ENCODE measurements at regions of chr10 and their contacts with region 1.

Region 1: DNA sequence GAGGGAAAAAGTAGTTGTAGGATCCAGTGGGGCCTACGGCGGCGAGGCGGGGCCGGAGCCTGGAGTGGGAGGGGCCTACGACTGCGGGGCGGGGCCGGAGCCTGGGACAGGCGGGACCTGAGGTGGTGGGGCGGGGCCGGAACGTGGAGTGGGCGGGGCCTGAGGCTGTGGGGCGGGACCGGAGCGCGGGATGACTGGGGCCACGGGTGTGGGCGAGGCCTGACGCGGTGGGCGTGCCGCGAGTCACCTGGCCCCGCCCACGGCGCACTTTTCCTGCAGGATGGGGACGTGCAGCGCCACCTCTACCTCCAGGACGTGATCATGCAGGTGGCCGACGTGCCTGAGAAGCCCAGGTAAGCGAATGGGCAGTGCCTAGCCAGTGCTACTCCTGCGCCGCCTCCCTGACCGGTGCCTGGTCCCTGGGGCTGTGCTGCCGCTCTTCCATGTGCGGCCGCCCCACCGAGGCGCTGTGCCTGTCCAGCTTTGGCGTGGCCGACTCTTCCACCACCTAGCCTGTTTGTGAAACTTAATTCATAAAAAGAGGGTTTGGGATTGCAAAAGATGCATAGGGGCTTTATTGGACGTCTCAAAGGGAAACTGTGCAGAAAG is 501 bp downstream of the ZNF511 start:
- DNase-seq: peak; percentile 96
- H3K4me3 ChIP-seq: peak overlapping the region; percentile 60 to 99 (median 96)
- H3K27ac ChIP-seq: peak overlapping the region; percentile 86 to 97 (median 94)
- H3K4me1 ChIP-seq: peaks cover 0 to 50% (median 41%) of the 10 kb centered on the region in 4 donors
- H3K27me3 ChIP-seq: no peaks in the 10 kb centered on the region
- CTCF ChIP-seq: no peak
- EP300 ChIP-seq: no peak
- POLR2A ChIP-seq: no peak

Region 2: DNA sequence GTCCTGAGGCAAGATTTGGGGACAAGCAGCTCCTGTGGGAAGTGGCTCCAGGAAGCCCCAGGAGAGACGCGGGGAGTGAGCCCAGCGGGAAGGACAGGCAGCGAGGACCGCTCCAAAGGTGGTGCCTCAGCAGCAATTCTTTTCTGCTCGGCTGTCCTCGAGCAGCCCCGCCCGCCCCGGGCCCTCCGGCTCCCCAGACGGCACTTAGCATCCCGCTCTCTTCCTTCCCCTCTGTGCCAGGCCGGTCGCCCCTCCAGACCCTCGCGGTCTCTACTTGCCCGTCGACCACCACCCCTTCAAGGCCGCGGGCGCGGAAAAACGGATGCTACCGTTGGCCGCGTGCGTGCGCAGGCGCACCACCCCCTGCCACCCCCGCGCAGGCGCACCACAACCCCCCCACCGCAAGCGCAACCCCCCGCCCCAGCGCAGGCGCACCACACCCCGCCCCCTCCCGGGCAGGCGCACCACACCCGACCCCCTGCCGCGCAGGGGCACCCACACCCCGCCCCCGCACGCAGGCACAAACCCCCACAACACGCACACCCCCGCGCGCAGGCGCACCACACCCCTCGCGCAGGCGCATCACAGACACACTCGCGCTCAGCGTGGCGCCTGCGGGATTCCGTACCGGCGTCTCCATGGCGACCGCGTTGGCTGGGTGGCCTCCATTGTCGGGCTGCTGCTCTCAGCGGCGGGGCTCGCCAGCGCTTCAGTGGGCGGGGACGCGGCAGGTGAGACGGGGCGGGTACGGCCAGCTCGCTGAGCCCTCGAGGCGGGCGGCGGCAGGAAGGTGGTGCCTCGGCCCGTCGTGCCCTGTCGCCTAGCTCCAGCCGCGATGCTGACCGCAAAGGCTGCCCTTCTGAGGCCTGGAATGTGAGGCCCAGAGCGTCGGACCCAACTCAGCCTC is 977.4 kb before region 1 on chr10 and contains the start of gene LRRC27:
- intact Hi-C with region 1: loop called (anchors 10 kb)
- DNase-seq: peak; percentile 99
- H3K4me3 ChIP-seq: peak within 1 kb of the TSS; percentile 81 to 87 (median 84)
- H3K27ac ChIP-seq: peak within 1 kb of the TSS; percentile 86 to 90 (median 87)
- H3K4me1 ChIP-seq: peaks cover 0 to 40% (median 36%) of the 10 kb centered on the region in 4 donors
- H3K27me3 ChIP-seq: no peaks in the 10 kb centered on the region
- CTCF ChIP-seq: no peak
- EP300 ChIP-seq: peak in 1 of 4 donors; percentile 47
- POLR2A ChIP-seq: peak in 1 of 2 donors; percentile 47
- total RNA-seq, gene LRRC27: 6.1 to 15.5 (median 8.1) TPM

Region 3: DNA sequence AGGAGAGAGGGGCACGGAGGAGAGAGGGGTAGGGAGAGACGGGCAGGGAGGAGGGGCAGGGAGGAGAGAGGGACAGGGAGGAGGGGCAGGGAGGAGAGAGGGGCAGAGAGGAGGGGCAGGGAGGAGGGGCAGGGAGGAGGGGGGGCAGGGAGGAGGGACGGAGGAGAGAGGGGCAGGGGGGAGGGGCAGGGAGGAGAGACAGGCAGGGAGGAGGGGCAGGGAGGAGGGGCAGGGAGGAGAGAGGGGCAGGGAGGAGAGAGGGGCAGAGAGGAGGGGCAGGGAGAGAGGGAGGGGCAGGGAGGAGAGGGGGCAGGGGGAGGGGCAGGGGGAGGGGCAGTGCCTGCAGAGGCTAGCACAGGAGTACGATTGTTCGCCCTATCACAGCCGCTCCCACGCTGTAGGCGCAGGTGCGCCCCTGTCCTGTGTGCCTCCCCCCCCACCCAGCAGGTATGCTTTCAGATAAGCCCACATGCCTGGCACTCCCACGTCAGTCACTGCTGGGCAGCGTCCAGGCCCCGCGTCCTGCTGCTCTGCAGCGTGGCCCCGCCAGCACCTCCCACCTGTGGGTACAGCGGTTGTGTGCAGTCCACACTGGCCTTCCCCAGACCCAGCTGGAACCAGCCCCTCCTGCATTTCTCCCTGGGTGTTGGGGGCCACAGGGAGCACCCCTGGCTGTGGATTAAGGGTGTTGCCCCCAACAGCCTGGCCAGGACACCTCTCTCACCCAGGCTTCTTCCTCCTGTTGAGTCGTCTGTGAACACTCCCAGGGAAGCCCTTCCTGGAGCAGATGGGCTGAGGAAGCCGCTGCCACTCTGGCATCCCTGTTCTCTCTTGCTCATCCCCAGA is 534.1 kb before region 1 on chr10:
- intact Hi-C with region 1: no loop called
- DNase-seq: no peak
- H3K4me3 ChIP-seq: no peak overlapping the region
- H3K27ac ChIP-seq: no peak overlapping the region
- H3K4me1 ChIP-seq: peaks cover 0 to 7% (median 0%) of the 10 kb centered on the region in 4 donors
- H3K27me3 ChIP-seq: peaks cover 0 to 4% (median 0%) of the 10 kb centered on the region in 3 donors
- CTCF ChIP-seq: no peak
- EP300 ChIP-seq: no peak
- POLR2A ChIP-seq: no peak

Region 4: DNA sequence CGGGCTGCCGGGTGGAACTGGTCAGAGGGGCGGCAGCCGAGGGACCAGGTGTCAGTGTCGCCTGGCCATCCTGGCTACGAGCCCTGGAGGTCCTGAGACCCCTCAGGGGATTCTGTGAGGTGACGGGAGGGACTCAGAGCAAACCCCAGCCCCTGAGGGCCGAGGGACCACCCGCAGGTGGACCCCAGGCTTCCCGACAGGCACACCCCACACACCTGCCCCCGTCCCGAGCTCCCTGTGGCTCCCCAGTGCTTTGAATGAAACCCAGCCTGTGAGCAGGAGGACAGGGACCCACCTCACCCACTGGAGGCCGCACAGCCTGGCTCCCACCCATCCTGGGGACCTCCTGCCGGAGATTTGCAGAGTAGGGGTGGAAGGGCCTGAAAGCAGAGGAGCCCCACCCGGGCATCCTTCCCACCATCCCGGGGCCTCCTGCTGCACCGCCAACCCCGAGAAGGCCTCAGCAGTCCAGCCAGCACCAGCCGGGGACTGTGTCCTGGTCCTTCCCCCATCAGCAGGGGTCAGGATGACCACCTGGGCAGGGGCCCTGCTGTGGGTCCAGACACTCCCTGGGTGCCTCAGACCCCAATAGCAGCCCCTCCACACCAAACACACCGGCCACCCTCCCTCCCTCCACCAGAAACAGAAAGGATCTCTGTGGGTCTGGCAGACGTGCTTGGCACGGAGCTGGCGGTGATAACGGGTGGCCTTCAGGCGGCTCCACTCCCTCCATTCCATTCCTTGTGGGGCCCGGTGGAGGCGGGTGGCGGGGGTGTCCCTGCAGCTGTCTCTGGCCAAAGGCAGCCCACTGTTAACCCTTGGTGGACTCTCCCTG is 57.6 kb before region 1 on chr10:
- intact Hi-C with region 1: no loop called
- DNase-seq: no peak
- H3K4me3 ChIP-seq: no peak overlapping the region
- H3K27ac ChIP-seq: no peak overlapping the region
- H3K4me1 ChIP-seq: no peaks in the 10 kb centered on the region
- H3K27me3 ChIP-seq: peaks cover 0 to 51% (median 24%) of the 10 kb centered on the region in 3 donors
- CTCF ChIP-seq: no peak
- EP300 ChIP-seq: no peak
- POLR2A ChIP-seq: no peak

Region 5: GRCh38 chr10:133261726-133262325 is 47.4 kb before region 1 on chr10:
- intact Hi-C with region 1: loop called (anchors 1 kb)
- DNase-seq: peak; percentile 93
- H3K4me3 ChIP-seq: peak overlapping the region; percentile 73 to 99 (median 88)
- H3K27ac ChIP-seq: peak overlapping the region; percentile 87 to 95 (median 90)
- H3K4me1 ChIP-seq: peaks cover 0 to 38% (median 27%) of the 10 kb centered on the region in 4 donors
- H3K27me3 ChIP-seq: peaks cover 0 to 9% (median 0%) of the 10 kb centered on the region in 3 donors
- CTCF ChIP-seq: no peak
- EP300 ChIP-seq: no peak
- POLR2A ChIP-seq: no peak

Region 6: DNA sequence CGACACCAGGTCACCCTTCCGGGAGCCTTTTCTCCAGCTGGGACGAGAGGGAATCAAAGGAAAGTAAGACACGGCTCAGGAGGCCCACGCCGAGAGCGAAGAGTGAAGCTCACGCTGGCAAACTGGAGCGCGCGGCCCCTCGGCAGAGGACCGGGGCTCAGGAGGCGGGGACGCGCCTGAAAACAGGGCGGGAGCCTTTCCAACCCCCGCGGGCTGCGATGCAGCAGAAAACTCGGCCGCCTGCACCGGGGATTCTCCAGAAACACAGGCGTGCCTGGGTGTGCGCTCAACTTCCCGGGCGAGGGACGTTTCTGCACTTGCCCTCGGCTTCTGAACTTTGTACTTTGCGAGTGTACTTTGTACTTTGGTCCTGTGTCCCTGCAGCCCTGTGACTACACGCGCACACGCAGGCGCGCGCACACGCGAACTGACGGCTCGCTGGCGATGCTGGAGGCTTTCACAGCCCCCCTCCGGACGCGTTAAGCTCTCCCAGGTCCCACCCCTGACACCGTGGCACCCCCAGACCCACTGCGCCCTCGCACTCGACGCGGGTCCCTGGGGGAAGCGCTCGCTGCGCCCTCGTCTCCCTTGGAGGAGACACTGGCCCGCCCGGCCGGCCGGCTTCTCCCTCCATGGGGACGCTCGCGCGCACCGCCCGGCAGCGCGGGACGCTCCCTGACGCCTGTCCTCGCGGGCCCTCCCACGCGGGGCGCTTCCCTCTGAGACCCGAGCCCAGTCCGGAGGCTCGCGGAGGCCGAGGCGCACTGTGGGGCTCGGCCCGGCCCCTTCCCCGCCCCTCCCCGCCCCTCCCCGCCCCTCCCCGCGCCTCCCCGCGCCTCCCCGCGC is 69.3 kb after region 1 on chr10:
- intact Hi-C with region 1: loop called (anchors 2 kb)
- DNase-seq: peak; percentile 81
- H3K4me3 ChIP-seq: peak overlapping the region; percentile 64 to 98 (median 80)
- H3K27ac ChIP-seq: peak overlapping the region; percentile 83 to 93 (median 86)
- H3K4me1 ChIP-seq: peaks cover 0 to 32% (median 24%) of the 10 kb centered on the region in 4 donors
- H3K27me3 ChIP-seq: no peaks in the 10 kb centered on the region
- CTCF ChIP-seq: no peak
- EP300 ChIP-seq: no peak
- POLR2A ChIP-seq: peak in 1 of 2 donors; percentile 34

Region 7: DNA sequence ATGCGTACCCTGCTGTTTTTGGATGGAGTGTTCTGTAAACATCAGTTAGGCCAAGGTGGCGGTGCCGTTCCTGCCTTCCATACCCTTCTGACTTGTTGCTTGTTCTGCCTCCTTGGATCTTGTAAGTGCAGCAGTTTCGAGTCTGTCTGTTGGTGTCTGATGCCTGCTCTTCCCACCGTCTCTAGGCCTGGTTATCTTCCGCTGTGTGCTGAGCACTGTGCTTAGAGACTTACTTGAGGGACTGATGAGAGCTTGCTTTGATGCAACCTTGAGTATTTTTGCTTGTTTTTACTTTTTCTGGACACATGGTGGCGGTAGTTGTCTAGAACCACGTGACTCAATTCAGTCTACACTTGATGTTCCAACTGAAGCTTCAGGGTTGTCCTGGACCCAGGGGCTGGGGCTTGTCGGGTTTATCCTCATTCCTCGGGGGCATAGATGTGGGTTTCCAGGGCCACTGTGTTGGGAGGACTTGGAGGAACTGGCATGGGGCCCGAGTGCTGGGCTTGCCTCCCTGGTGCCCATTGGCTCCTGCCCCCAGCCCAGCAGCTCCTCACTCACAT is 129.6 kb after region 1 on chr10:
- intact Hi-C with region 1: no loop called
- DNase-seq: no peak
- H3K4me3 ChIP-seq: no peak overlapping the region
- H3K27ac ChIP-seq: no peak overlapping the region
- H3K4me1 ChIP-seq: no peaks in the 10 kb centered on the region
- H3K27me3 ChIP-seq: no peaks in the 10 kb centered on the region
- CTCF ChIP-seq: no peak
- EP300 ChIP-seq: no peak
- POLR2A ChIP-seq: no peak

Region 8: GRCh38 chr10:133520155-133520738 is 211.0 kb after region 1 on chr10:
- intact Hi-C with region 1: no loop called
- DNase-seq: peak; percentile 82
- H3K4me3 ChIP-seq: peak overlapping the region; percentile 19 to 48 (median 40)
- H3K27ac ChIP-seq: peak overlapping the region in 3 of 4 donors; percentile 55 to 65 (median 58)
- H3K4me1 ChIP-seq: peaks cover 0 to 13% (median 0%) of the 10 kb centered on the region in 4 donors
- H3K27me3 ChIP-seq: no peaks in the 10 kb centered on the region
- CTCF ChIP-seq: peak; percentile 25 to 90 (median 58)
- EP300 ChIP-seq: no peak
- POLR2A ChIP-seq: peak in 1 of 2 donors; percentile 8